HEK293 (cell line): ENCODE measurements at regions of chr6 and their contacts with region 1.

Region 1: GRCh38 chr6:97186416-97186999 is 96.5 kb downstream of the MMS22L start:
- H3K4me3 ChIP-seq: no peak overlapping the region
- H3K27ac ChIP-seq: no peak overlapping the region
- H3K4me1 ChIP-seq: no peaks in the 10 kb centered on the region
- CTCF ChIP-seq: peak; percentile 56

Region 2: GRCh38 chr6:97203343-97203742 is 16.8 kb after region 1 on chr6:
- CTCF ChIA-PET with region 1: interaction called, 79 read pairs
- POLR2A ChIA-PET with region 1: no interaction called
- H3K4me3 ChIP-seq: no peak overlapping the region
- H3K27ac ChIP-seq: no peak overlapping the region
- H3K4me1 ChIP-seq: 0 out of 2 replicates have a peak, but pooled peaks cover 4% of the 10 kb centered on the region
- CTCF ChIP-seq: no peak

Region 3: DNA sequence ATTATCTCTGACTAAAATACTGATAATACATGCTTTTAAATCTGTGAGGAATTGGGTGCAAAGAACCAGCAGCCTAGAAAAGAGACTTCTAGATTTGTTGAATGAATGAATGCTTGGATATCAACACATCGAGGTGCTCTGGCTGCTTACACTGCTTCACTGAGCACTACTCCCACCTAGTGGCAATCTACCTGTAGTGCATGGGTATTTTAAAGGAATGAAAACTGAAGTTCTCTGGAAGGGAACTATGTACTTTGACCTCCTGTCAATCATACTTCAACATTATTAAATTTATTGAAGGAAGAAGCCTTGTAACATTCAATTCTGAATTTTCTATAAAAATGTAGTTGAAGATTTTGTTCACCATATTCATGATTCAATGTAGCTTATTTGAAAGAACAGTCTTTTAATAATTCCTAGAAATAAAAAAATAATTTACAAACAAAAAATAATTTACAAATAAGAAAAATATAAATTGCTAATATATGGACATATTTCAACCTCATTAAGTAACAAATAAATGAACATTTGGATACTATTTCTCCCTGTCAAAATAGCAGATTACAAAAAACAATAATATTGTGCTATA is 207.7 kb after region 1 on chr6:
- CTCF ChIA-PET with region 1: interaction called, 55 read pairs
- POLR2A ChIA-PET with region 1: no interaction called
- H3K4me3 ChIP-seq: no peak overlapping the region
- H3K27ac ChIP-seq: no peak overlapping the region
- H3K4me1 ChIP-seq: no peaks in the 10 kb centered on the region
- CTCF ChIP-seq: peak; percentile 47; the same call in 1 of the 2 replicates